Activated T-helper 1 cell treated with anti-CD3 and anti-CD28 coated beads, Interleukin-12 subunit alpha, Interleukin-12 subunit beta, Interleukin-2, Interleukin-4 antibody, amounts not matched to agents 30 ng/mL and 10 ng/mL and 1 ng/mL, durations not matched to agents 14 hours and 24 hours and 36 hours (primary cell): ENCODE measurements at regions of chr4 and their contacts with region 1.

Region 1: DNA sequence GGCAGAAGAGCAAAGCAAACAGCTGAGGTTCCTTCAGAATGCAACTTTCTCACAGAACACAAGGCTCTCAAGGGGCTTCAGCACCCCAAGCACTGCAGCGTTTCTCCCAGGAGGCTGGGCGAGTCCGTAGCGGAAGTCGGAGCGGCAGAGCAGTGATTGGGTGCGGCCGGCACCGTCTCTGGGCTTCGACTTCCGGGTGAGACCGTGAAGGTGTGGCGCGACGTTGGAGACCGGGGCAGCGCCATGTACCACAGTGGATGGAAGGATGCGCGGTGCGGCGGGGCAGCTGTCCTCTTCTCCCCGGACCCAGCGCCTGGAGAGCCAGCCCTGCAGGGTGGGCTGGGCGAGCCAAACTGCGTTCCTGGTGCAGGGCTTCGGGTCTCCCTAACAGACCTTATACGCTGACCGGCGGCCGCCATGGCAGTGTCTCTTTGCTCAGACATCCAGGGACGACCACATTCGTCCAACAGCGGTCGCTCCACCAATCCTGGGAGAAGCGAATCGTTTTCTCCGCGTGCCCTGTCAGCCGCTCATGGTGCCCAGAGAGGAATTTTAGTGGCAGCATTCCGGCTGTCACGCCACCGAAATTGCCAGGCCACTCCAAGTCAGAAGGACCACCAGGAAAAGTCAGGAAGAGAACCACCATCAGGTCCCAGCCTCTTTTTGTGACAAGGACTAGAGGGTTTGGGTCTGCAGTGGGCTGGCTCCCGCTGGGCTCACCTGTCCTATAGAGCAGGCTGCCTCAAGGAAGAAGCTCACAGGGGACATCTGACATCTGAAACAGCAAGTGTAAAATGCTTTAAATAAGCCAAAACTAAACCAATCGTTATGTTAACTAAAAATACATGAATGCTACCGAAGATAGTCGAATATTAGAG is 20.5 kb downstream of the TRIM61 start:
- DNase-seq: peak; percentile 78
- H3K4me3 Mint-ChIP-seq: peak overlapping the region; percentile 96
- H3K27ac Mint-ChIP-seq: peak overlapping the region; percentile 75
- H3K4me1 Mint-ChIP-seq: peaks cover 20% of the 10 kb centered on the region
- H3K27me3 Mint-ChIP-seq: no peaks in the 10 kb centered on the region

Region 2: DNA sequence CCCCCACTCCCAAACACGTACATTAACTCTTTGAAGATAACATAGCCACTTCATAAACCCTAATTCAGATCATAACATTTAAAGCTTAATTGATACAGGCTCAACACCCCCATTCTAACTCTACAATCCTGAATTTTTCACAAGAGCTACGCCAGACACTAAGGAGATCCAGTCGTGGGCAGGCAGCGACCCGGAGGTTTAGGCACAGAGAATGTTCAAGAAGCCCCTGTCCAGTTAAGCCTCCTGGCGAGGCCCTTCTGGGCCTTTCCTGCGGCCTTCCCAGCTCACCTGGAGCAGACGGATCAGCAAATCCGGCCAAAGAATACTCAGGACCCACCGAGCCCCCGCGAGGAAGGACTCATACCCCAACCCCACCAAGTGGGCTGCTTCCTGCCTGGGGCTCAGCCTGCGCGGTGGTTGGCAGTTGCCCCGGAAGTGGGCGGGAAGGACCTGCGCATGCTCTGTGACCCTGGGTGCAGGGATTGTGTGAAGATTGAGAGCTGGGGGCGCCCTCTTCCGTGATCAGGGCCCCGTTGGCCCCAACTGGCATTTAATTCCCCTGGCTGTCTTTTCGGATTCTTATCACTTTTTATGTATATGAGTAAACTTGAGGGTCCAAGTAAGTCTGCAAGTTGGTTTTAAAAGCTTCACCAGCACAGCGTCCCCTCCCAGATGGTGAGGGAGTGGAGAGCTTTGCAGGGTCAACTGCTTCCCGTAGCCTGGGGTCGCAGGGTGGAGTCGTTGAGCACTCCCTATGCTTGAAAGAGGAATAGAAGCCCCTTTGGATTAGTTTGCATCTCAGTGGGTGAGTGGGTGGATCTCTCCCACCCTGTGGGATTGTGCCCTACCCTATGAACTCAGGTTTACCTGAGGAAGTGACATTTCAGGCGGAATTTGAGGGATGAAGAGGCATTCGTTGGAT is 20.5 kb after region 1 on chr4 and contains the start of gene TRIM61:
- intact Hi-C with region 1: loop called (anchors 1 kb)
- DNase-seq: peak; percentile 69
- H3K4me3 Mint-ChIP-seq: peak within 1 kb of the TSS; percentile 84
- H3K27ac Mint-ChIP-seq: peak within 1 kb of the TSS; percentile 54
- H3K4me1 Mint-ChIP-seq: peaks cover 16% of the 10 kb centered on the region
- H3K27me3 Mint-ChIP-seq: no peaks in the 10 kb centered on the region
- total RNA-seq, gene TRIM61: 2.4 and 3.1 TPM in 2 replicates

Region 3: GRCh38 chr4:165112368-165113139 is 155.5 kb after region 1 on chr4 and contains the start of gene TMEM192:
- intact Hi-C with region 1: loop called (anchors 1 kb)
- DNase-seq: peak; percentile 87
- H3K4me3 Mint-ChIP-seq: peak within 1 kb of the TSS; percentile 91
- H3K27ac Mint-ChIP-seq: peak within 1 kb of the TSS; percentile 86
- H3K4me1 Mint-ChIP-seq: peaks cover 12% of the 10 kb centered on the region
- H3K27me3 Mint-ChIP-seq: peaks cover 7% of the 10 kb centered on the region
- total RNA-seq, gene TMEM192: 8.1 and 10.5 TPM in 2 replicates